Caco-2 (cell line): ENCODE measurements at regions of chr20 and their contacts with region 1.

Region 1: DNA sequence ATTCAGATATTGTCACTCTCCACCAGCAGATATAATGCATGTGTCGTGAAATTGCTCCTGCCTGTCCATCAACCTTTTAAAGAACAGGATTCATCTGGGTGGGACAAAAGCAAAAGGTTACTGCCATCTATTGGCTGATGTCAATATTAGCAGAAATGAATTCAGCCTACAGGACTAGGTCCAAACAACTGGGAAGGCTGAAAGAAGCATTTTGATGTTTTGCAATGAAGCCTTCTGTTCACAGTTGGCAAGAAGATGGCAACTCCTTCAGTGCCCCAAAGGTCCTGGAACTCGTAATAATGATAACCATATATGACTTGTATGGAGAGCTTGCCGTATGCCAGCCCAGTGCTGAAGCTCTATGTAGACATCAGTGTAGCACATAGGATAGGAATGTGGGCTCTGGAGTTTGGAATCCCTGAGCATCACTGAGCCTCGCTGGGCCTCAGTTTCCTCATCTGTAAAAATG is 7.5 kb downstream of the BCAS1 start:
- DNase-seq: peak in 1 of 2 experiments; percentile 63
- H3K4me3 ChIP-seq: no peak overlapping the region
- H3K4me3 Mint-ChIP-seq: no peak overlapping the region
- H3K27ac Mint-ChIP-seq: no peak overlapping the region
- H3K4me1 ChIP-seq: peaks cover 19% of the 10 kb centered on the region
- H3K4me1 Mint-ChIP-seq: peaks cover 5% of the 10 kb centered on the region
- H3K27me3 ChIP-seq: no peaks in the 10 kb centered on the region
- H3K27me3 Mint-ChIP-seq: no peaks in the 10 kb centered on the region
- CTCF ChIP-seq: peak; percentile 92

Region 2: GRCh38 chr20:53157443-53158408 is 905.1 kb before region 1 on chr20:
- CTCF ChIA-PET with region 1: no interaction called
- POLR2A ChIA-PET with region 1: no interaction called
- intact Hi-C with region 1: loop called (anchors 2 kb)
- DNase-seq: peak; percentile 71 to 81
- H3K4me3 ChIP-seq: no peak overlapping the region
- H3K4me3 Mint-ChIP-seq: no peak overlapping the region
- H3K27ac Mint-ChIP-seq: no peak overlapping the region
- H3K4me1 ChIP-seq: no peaks in the 10 kb centered on the region
- H3K4me1 Mint-ChIP-seq: no peaks in the 10 kb centered on the region
- H3K27me3 ChIP-seq: no peaks in the 10 kb centered on the region; the same call in 1 of the 2 replicates
- H3K27me3 Mint-ChIP-seq: no peaks in the 10 kb centered on the region
- CTCF ChIP-seq: peak; percentile 69 to 75

Region 3: GRCh38 chr20:53413186-53413631 is 649.6 kb before region 1 on chr20:
- CTCF ChIA-PET with region 1: no interaction called
- POLR2A ChIA-PET with region 1: no interaction called
- intact Hi-C with region 1: loop called (anchors 5 kb)
- DNase-seq: peak; percentile 92 to 93
- H3K4me3 ChIP-seq: no peak overlapping the region
- H3K4me3 Mint-ChIP-seq: peak overlapping the region; percentile 48
- H3K27ac Mint-ChIP-seq: no peak overlapping the region
- H3K4me1 ChIP-seq: no peaks in the 10 kb centered on the region
- H3K4me1 Mint-ChIP-seq: no peaks in the 10 kb centered on the region
- H3K27me3 ChIP-seq: no peaks in the 10 kb centered on the region; the same call in 1 of the 2 replicates
- H3K27me3 Mint-ChIP-seq: no peaks in the 10 kb centered on the region
- CTCF ChIP-seq: peak; percentile 97 to 100

Region 4: GRCh38 chr20:53939572-53940359 is 123.1 kb before region 1 on chr20:
- CTCF ChIA-PET with region 1: interaction called, 3 read pairs
- POLR2A ChIA-PET with region 1: no interaction called
- intact Hi-C with region 1: loop called (anchors 1 kb)
- DNase-seq: peak; percentile 95 to 96
- H3K4me3 ChIP-seq: no peak overlapping the region
- H3K4me3 Mint-ChIP-seq: no peak overlapping the region
- H3K27ac Mint-ChIP-seq: no peak overlapping the region
- H3K4me1 ChIP-seq: peaks cover 30% of the 10 kb centered on the region
- H3K4me1 Mint-ChIP-seq: peaks cover 35% of the 10 kb centered on the region
- H3K27me3 ChIP-seq: no peaks in the 10 kb centered on the region; the same call in 1 of the 2 replicates
- H3K27me3 Mint-ChIP-seq: no peaks in the 10 kb centered on the region
- CTCF ChIP-seq: peak; percentile 93 to 98

Region 5: GRCh38 chr20:53966774-53967398 is 96.0 kb before region 1 on chr20:
- CTCF ChIA-PET with region 1: no interaction called
- POLR2A ChIA-PET with region 1: no interaction called
- intact Hi-C with region 1: no loop called
- DNase-seq: no peak
- H3K4me3 ChIP-seq: no peak overlapping the region
- H3K4me3 Mint-ChIP-seq: no peak overlapping the region
- H3K27ac Mint-ChIP-seq: no peak overlapping the region
- H3K4me1 ChIP-seq: no peaks in the 10 kb centered on the region
- H3K4me1 Mint-ChIP-seq: no peaks in the 10 kb centered on the region
- H3K27me3 ChIP-seq: peaks cover 2% of the 10 kb centered on the region; the same call in 1 of the 2 replicates
- H3K27me3 Mint-ChIP-seq: peaks cover 26% of the 10 kb centered on the region
- CTCF ChIP-seq: no peak

Region 6: DNA sequence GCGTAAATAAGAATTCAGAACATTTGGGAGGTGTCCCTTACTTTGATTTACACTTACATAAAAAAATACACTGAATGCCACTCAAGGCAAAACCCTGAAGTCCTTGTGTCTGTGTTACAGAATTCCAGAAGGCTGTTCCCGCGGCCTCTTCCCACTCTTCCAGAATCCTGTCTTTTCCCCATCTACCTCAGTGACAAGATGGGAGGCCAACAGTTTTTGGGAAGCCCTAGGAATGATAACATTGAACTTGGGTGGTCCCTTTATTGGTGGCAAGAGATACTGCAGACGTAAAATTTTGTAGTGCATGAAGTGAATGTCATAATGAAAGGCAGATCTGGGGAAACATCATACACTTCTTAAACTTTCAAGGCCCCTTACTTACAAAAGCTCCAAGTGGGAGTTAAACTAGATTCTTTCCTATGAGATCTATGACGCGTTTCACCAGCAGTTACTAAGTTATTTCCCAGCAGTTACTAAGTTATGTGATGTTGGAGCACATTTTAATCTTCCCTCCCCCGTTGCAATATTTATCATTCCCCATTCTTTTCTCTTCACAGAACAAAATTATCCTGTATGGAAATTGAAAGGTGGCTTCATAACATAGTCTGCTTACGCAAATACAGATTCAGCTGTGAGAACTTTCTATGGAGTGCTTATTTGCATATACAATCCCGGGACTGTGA is 71.9 kb before region 1 on chr20:
- CTCF ChIA-PET with region 1: no interaction called
- POLR2A ChIA-PET with region 1: no interaction called
- intact Hi-C with region 1: loop called (anchors 5 kb)
- DNase-seq: no peak
- H3K4me3 ChIP-seq: no peak overlapping the region
- H3K4me3 Mint-ChIP-seq: no peak overlapping the region
- H3K27ac Mint-ChIP-seq: no peak overlapping the region
- H3K4me1 ChIP-seq: no peaks in the 10 kb centered on the region
- H3K4me1 Mint-ChIP-seq: no peaks in the 10 kb centered on the region
- H3K27me3 ChIP-seq: no peaks in the 10 kb centered on the region
- H3K27me3 Mint-ChIP-seq: peaks cover 32% of the 10 kb centered on the region
- CTCF ChIP-seq: no peak

Region 7: GRCh38 chr20:54219751-54220426 is 157.0 kb after region 1 on chr20:
- CTCF ChIA-PET with region 1: no interaction called
- POLR2A ChIA-PET with region 1: no interaction called
- intact Hi-C with region 1: no loop called
- DNase-seq: peak in 1 of 2 experiments; percentile 58
- H3K4me3 ChIP-seq: no peak overlapping the region
- H3K4me3 Mint-ChIP-seq: no peak overlapping the region
- H3K27ac Mint-ChIP-seq: no peak overlapping the region
- H3K4me1 ChIP-seq: no peaks in the 10 kb centered on the region
- H3K4me1 Mint-ChIP-seq: no peaks in the 10 kb centered on the region
- H3K27me3 ChIP-seq: no peaks in the 10 kb centered on the region
- H3K27me3 Mint-ChIP-seq: no peaks in the 10 kb centered on the region
- CTCF ChIP-seq: peak; percentile 70 to 78